Sigmoid colon (tissue), 7 donors: ENCODE measurements at regions of chr1 and their contacts with region 1.

Region 1: GRCh38 chr1:12596007-12596821 is 21.8 kb downstream of the DHRS3 start:
- DNase-seq: peak; percentile 97
- H3K4me3 ChIP-seq: peak overlapping the region; percentile 10 to 47 (median 42)
- H3K27ac ChIP-seq: peak overlapping the region; percentile 90 to 99 (median 94)
- H3K4me1 ChIP-seq: peaks cover 0 to 100% (median 98%) of the 10 kb centered on the region in 4 donors
- H3K27me3 ChIP-seq: no peaks in the 10 kb centered on the region
- CTCF ChIP-seq: no peak
- EP300 ChIP-seq: peak in 2 of 4 donors; percentile 80 to 88
- POLR2A ChIP-seq: peak in 1 of 2 donors; percentile 7

Region 2: GRCh38 chr1:12177999-12178441 is 418.2 kb before region 1 on chr1:
- intact Hi-C with region 1: no loop called
- DNase-seq: peak; percentile 91
- H3K4me3 ChIP-seq: no peak overlapping the region
- H3K27ac ChIP-seq: peak overlapping the region; percentile 51 to 82 (median 72)
- H3K4me1 ChIP-seq: peaks cover 0 to 54% (median 37%) of the 10 kb centered on the region in 4 donors
- H3K27me3 ChIP-seq: no peaks in the 10 kb centered on the region
- CTCF ChIP-seq: no peak
- EP300 ChIP-seq: no peak
- POLR2A ChIP-seq: no peak

Region 3: DNA sequence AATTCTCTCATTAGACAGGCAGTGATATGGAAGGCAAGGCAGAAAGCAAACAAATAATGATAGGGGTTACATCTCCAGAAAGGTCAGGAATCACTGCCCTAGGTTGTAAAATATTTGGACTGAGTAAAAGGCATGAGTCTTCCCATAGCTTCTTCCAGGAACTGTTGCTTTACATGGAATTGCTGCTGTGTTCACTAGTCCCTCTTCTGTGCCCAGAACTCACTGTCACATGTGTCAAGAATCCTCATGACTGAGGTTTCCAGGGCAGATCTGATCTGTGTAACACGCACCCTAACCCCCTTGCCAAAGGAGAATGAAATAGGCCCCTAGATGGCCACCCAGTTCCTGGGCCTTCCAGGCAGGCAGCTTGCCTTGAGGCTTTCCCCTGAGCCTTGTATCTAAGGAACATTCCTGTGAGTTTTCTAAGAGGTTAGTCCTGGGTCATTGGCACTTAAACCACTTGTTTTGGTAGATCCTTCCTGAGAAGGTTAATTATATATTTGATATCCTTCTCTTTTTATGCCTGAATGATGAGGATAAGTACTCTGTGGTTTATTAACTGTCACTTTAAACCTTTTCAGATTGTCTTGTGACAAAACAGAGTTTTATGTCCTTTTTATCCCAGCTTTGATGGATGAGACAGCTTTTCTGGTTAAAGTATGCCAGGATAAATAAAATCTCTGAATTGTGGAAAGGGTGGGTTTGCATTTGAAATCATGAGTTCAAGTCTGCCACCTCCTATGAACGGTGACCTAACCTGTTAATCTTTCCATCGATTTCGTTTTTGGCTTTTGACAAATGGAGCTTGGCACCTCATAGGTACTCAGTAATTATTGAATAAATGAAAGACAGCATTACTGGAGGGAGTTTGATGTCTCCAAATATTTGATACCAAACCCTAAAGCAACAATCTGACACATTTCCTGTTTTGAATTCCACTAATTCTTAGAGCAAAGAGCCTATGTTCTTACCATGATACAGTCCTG is 141.5 kb before region 1 on chr1:
- intact Hi-C with region 1: no loop called
- DNase-seq: peak; percentile 80
- H3K4me3 ChIP-seq: no peak overlapping the region
- H3K27ac ChIP-seq: peak overlapping the region; percentile 76 to 89 (median 86)
- H3K4me1 ChIP-seq: peaks cover 0 to 97% (median 89%) of the 10 kb centered on the region in 4 donors
- H3K27me3 ChIP-seq: no peaks in the 10 kb centered on the region
- CTCF ChIP-seq: no peak
- EP300 ChIP-seq: peak in 1 of 4 donors; percentile 13
- POLR2A ChIP-seq: no peak

Region 4: DNA sequence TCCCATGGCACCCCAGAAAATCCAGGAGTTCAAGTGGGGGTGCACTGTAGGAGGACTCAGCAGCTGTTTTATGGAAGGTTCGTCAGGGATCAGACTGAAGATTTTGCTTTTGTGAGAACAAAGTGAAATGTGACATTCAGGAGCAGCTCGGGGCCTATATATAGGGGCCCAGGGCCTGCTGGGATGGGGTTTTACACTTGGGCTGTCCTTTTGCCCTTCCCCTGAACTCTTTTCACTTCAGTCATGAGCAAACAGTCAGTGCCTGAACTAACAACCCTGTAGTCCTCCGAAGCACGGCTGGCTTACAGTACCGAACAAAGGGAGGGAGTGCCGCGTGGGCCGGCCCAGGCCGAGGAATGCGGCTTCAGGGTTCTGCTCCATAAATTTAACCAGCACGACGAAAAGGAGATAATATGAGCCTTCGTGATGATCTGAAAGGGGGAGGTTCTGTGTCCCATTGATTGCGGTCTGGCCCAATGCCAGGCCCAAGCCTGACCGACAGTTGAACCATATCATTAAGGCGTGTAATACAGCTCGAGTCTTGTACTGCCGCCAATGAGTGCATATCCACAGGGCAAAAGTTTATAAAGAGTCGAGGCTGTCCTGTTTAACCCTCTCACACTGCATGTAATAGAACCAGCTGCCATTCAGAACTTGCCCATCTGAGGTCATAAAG is 118.1 kb before region 1 on chr1:
- intact Hi-C with region 1: loop called (anchors 5 kb)
- DNase-seq: peak; percentile 90
- H3K4me3 ChIP-seq: no peak overlapping the region
- H3K27ac ChIP-seq: peak overlapping the region; percentile 80 to 90 (median 85)
- H3K4me1 ChIP-seq: peaks cover 0 to 92% (median 88%) of the 10 kb centered on the region in 4 donors
- H3K27me3 ChIP-seq: no peaks in the 10 kb centered on the region
- CTCF ChIP-seq: no peak
- EP300 ChIP-seq: peak in 3 of 4 donors; percentile 23 to 59 (median 24)
- POLR2A ChIP-seq: no peak

Region 5: GRCh38 chr1:12556368-12556930 is 39.8 kb before region 1 on chr1:
- intact Hi-C with region 1: loop called (anchors 5 kb)
- DNase-seq: peak; percentile 91
- H3K4me3 ChIP-seq: no peak overlapping the region
- H3K27ac ChIP-seq: peak overlapping the region; percentile 88 to 92 (median 89)
- H3K4me1 ChIP-seq: peaks cover 0 to 68% (median 55%) of the 10 kb centered on the region in 4 donors
- H3K27me3 ChIP-seq: no peaks in the 10 kb centered on the region
- CTCF ChIP-seq: no peak
- EP300 ChIP-seq: peak; percentile 15 to 96 (median 84)
- POLR2A ChIP-seq: no peak